ENCODE measurements at regions of chr1 and their contacts with region 1.

Region 1: GRCh38 chr1:27556781-27557595 is 47.0 kb downstream of the AHDC1 start:
- DNase-seq: peak; percentile 80
- H3K4me3 ChIP-seq: no peak overlapping the region; the same call in 1 of the 2 replicates
- H3K27ac ChIP-seq: peak overlapping the region; percentile 43
- H3K27me3 ChIP-seq: no peaks in the 10 kb centered on the region
- CTCF ChIP-seq: peak; percentile 89

Region 2: DNA sequence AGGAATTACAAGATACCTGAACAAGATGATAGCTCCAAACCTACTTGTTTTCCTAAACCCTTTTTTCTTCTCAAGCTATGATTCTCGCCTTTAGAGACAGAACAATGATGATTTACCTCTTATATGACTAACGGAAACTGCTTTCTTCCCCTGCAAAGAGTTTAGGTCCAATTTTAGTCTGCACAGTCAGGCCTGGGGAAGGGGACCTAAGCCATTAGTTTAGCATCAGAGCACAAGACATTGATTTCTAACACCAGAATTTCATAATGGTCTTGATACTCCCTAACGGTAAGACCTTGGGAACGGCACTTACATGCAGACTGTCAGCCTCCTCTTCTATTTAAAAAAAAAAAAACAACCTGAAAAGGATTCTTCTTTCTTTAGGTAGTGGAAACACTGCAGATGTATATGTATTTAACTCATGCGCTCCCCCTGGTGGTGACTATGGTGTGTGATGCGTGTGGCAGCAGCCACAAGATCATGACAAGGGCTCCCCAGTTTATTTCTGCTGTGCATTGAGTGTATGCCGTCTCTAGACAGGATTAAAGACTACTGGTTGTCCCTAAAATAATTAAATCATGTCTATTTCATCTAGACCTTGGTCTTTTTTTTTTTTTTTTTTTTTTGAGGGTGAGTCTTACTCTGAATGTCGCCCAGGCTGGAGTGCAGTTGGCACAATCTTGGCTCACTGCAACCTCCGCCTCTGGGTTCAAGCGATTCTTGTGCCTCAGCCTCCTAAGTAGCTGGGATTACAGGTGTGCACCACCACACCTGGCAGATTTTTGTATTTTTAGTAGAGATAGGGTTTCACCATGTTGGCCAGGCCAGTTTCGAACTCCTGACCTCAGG is 272.3 kb before region 1 on chr1:
- CTCF ChIA-PET with region 1: no interaction called
- POLR2A ChIA-PET with region 1: no interaction called
- DNase-seq: peak; percentile 53
- H3K4me3 ChIP-seq: no peak overlapping the region
- H3K27ac ChIP-seq: no peak overlapping the region
- H3K27me3 ChIP-seq: no peaks in the 10 kb centered on the region
- CTCF ChIP-seq: peak; percentile 82

Region 3: DNA sequence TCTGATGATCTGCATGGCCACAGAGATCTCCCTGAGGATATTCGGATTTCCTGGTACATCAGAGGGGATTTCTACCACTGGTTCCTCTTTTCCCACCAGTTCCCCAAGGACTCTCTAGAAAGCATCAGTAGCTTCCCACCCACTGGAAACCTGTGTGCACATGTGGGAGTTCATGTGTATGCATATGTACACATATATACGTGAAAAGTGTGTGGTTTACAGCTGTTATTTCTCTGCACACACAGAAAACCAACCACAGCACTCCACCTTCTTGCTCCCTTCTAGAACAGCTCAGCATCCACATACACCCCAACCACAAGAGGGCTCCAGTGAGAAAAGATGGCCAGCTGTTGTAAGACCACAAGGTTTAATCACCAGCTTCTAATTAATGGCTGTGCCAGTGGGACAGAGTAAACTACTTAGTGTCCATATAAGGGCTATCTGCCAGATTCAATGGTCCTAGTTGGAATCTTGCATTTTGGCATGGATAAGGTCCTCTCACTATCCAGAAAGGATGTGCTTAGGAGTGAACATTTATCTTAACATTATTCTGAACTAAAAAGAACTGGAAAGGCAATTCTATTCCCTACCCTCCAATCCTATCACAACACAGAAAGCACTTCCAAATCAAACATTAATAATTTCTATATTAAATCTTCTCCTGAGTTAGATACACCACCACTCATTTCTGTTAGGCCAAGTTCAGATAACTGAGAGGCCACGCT is 140.4 kb before region 1 on chr1:
- CTCF ChIA-PET with region 1: interaction called, 10 read pairs
- POLR2A ChIA-PET with region 1: no interaction called
- DNase-seq: no peak
- H3K4me3 ChIP-seq: no peak overlapping the region
- H3K27ac ChIP-seq: no peak overlapping the region
- H3K27me3 ChIP-seq: no peaks in the 10 kb centered on the region
- CTCF ChIP-seq: peak; percentile 76

Region 4: DNA sequence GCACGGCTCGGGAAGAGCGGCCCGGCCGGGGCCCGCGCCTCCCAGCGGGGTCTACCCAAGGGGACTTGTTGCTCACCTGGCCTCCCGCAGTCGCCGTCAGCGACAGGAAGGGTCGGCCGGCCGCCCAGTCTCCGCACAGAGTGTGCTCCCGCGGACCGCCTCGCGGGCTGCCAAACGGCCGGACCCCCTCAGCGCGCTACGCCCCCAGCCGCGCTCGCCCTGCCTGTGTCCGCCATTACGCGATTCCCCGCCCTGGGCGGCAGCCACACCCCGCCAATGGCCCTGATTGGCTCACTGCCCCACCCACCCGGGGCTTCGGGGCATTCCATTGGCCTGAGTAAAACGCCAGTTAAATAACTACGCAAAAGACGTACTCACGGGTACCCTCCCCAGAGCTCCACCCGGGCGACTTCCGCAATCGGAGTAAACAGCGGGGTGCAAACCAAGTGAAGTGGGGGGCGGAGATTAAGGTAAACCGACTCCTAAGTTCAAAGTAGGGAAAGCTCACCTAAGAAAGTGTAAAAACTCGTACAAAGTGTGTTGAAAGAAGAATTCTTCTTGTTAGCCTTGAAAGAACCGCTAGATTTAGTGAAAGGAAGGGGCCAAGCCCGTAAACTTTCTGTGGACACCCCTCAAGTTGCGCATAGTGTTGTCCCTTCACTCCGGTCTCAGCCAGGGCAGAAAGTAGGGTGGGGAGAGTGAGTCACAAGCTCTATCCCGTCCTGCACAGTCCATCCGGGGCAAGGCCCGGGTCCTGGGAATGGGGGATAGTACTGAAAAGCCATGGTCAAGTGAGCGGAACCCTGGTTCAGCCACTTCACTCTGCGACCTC is 66.9 kb before region 1 on chr1 and contains the start of gene WASF2:
- CTCF ChIA-PET with region 1: interaction called, 8 read pairs
- POLR2A ChIA-PET with region 1: interaction called, 13 read pairs
- DNase-seq: peak; percentile 92
- H3K4me3 ChIP-seq: peak within 1 kb of the TSS; percentile 75
- H3K27ac ChIP-seq: peak within 1 kb of the TSS; percentile 90
- H3K27me3 ChIP-seq: no peaks in the 10 kb centered on the region
- CTCF ChIP-seq: no peak
- polyA plus RNA-seq, gene WASF2: 54.8 and 62.7 TPM in 2 replicates

Region 5: GRCh38 chr1:27536767-27537166 is 20.2 kb before region 1 on chr1:
- CTCF ChIA-PET with region 1: interaction called, 79 read pairs
- POLR2A ChIA-PET with region 1: no interaction called
- DNase-seq: peak; percentile 46
- H3K4me3 ChIP-seq: no peak overlapping the region
- H3K27ac ChIP-seq: peak overlapping the region; percentile 21
- H3K27me3 ChIP-seq: no peaks in the 10 kb centered on the region
- CTCF ChIP-seq: peak; percentile 14; the same call in 1 of the 2 replicates

Region 6: DNA sequence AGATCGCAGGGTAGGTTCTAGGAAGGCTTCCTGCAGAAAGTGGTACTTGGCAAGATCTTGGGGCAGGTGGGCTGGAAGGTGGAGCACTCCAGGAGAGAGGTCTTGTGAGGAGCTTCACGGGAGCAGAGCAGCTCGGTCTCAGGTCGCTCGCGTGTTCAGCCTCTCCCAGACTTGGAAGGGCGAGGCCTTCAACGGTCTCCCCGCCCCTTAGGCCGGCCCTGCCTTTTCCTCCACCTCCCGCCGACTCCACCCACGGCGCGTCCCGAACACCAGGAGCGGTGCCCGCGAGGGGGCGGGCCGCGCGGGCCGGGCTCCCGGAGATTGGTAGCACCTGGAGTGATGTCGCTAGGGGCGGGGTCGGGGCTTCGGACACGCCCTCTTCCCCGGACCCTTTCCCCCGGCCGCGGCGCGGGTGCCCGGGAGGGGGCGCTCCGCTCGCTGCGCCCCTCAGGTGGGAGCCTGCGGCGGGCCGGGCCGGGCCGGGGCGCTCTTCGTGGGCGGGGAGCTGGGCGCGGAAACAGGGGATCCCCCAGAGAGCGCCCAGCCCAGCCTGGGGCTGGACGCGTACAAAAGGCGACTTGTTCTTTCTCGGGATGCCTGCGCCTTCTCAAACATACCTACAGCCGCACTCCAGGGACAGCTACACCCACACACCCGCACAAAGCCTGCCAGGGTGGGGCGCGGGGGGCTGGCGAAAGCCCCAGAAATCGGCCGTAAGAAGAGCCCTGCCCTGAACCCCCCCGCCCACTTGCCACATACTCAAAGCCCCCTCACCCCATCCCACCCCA is 11.5 kb after region 1 on chr1:
- CTCF ChIA-PET with region 1: interaction called, 125 read pairs
- POLR2A ChIA-PET with region 1: interaction called, 4 read pairs
- DNase-seq: peak; percentile 46
- H3K4me3 ChIP-seq: peak overlapping the region; percentile 39
- H3K27ac ChIP-seq: no peak overlapping the region
- H3K27me3 ChIP-seq: no peaks in the 10 kb centered on the region
- CTCF ChIP-seq: peak; percentile 36

Region 7: DNA sequence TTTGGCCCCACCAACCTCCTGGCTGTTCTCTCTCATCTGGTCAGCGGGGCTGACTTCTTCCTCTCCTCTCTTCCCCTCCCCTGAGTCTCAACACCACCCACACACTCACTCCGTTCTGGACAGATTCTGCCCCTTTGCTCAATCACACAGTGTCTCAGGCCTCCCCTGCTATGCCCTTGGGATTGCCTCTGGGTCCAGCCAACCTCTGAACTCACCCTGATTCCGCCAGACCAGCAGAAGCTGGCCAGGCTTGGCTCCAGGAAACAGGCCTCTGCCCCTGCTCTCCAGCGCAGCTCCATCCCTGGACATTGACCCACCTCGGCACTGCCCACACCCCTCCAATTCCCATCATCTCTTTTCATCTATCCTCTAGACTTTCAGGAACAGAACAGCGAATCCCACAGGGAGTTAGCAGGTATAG is 24.8 kb after region 1 on chr1:
- CTCF ChIA-PET with region 1: interaction called, 46 read pairs
- POLR2A ChIA-PET with region 1: no interaction called
- DNase-seq: no peak
- H3K4me3 ChIP-seq: no peak overlapping the region
- H3K27ac ChIP-seq: no peak overlapping the region
- H3K27me3 ChIP-seq: no peaks in the 10 kb centered on the region
- CTCF ChIP-seq: no peak

Region 8: GRCh38 chr1:27603681-27604578 is 46.9 kb after region 1 on chr1 and contains the start of gene AHDC1:
- CTCF ChIA-PET with region 1: interaction called, 180 read pairs
- POLR2A ChIA-PET with region 1: interaction called, 12 read pairs
- DNase-seq: peak; percentile 61
- H3K4me3 ChIP-seq: peak within 1 kb of the TSS; percentile 88
- H3K27ac ChIP-seq: peak within 1 kb of the TSS; percentile 21
- H3K27me3 ChIP-seq: no peaks in the 10 kb centered on the region
- CTCF ChIP-seq: no peak
- polyA plus RNA-seq, gene AHDC1: 2.8 and 3.0 TPM in 2 replicates

Region 9: DNA sequence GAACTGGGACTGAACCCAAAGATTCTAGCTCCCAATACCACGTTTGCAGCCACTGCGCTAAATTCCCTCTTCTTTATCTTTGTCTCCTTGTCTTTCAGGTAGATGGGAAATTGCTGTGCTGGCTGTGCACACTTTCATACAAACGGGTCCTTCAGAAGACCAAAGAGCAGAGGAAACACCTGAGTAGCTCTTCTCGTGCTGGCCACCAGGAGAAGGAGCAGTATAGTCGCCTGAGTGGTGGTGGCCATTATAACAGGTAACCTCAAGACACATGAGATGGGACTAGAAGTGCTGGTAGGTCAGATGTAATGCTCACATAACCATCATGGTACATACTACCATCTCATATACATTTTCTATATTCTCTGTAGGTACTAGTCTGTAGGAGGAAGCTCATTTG is 187.6 kb after region 1 on chr1:
- CTCF ChIA-PET with region 1: no interaction called
- POLR2A ChIA-PET with region 1: no interaction called
- DNase-seq: no peak
- H3K4me3 ChIP-seq: no peak overlapping the region
- H3K27ac ChIP-seq: no peak overlapping the region
- H3K27me3 ChIP-seq: no peaks in the 10 kb centered on the region
- CTCF ChIP-seq: no peak

Region 10: DNA sequence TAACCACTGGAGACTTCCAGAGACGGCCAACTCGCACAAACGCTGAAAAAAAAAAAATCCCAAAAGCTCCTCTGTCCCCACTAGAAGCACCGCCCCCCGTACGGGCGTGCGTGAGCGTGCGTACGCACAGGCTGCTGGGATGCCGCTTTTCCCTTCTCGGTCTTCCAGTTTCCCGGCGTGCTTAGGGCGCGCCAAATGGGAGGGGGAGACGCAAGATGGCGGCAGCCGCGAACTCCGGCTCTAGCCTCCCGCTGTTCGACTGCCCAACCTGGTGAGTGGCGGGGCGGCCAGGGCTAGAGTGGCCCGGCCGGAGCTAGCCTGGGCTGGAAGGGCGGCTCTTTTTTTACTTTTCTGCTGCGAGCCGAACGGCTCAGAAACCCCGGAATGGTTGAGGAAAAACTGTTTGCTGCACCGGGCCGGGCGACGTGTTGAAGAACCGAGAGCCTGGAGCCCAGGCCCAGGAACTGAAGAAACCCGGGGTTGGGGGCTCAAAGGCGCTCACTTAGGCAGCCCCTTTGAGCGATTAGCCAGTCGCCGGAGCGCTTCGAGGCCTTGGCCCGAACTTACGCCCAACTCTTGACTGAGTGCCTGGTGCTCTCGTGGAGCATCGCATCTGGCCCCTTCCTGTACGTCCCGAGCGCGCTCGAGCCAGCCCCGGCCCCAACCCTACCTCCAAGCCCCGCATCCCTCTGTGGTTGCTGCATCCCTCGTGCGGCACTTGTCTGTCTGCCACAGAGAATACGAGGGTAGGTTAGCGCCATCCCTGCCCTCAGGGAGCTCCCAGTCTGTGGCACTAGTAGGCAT is 273.8 kb after region 1 on chr1 and contains the start of gene PPP1R8:
- CTCF ChIA-PET with region 1: no interaction called
- POLR2A ChIA-PET with region 1: no interaction called
- DNase-seq: peak; percentile 83
- H3K4me3 ChIP-seq: peak within 1 kb of the TSS; percentile 93
- H3K27ac ChIP-seq: peak within 1 kb of the TSS; percentile 85
- H3K27me3 ChIP-seq: no peaks in the 10 kb centered on the region
- CTCF ChIP-seq: no peak
- polyA plus RNA-seq, gene PPP1R8: 52.7 and 55.2 TPM in 2 replicates